Activated CD4-positive, alpha-beta T cell treated with anti-CD3 and anti-CD28 coated beads for 36 hours (primary cell): ENCODE measurements at regions of chr22 and their contacts with region 1.

Region 1: DNA sequence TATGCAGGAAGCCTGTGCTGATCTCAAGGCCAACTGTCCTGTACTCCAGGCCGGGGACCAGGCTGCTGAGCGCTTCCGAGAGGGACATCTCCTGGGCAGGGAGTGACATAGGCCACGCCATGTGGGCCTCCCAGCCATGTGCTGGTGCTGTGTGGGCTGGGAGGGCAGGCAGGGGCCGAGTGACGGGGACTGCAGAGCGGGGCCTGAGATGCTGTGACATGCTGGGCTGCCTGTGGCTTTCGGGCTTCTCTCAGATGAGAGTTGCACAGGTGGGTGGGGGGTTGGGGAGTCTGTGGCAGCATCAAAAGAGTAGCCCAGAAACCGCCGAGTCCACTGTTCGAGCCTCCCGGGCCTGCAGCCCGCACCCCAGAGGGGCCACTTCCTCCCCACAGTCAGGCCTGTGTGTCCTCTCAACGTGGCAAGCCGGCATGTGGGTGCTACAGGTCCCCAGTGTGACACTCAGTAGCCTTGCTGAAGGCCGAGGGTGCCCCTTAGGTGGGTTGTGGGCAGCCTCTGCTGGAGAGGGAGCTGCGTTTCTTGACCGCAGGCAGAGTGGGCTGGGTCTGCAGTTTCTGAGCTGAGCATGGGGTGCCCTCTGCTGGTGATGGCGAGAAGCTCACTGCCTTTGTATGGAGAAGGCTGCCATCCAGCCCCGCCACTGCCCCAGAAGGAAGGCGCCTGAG is 101.2 kb downstream of the BCR start:
- DNase-seq: peak; percentile 89
- ATAC-seq: peak; percentile 71
- H3K4me3 Mint-ChIP-seq: no peak overlapping the region
- H3K27ac Mint-ChIP-seq: no peak overlapping the region
- H3K4me1 Mint-ChIP-seq: peaks cover 25% of the 10 kb centered on the region
- H3K27me3 Mint-ChIP-seq: no peaks in the 10 kb centered on the region

Region 2: GRCh38 chr22:23240639-23241389 is 40.7 kb before region 1 on chr22:
- CTCF ChIA-PET with region 1: interaction called, 5 read pairs
- POLR2A ChIA-PET with region 1: interaction called, 6 read pairs
- intact Hi-C with region 1: loop called (anchors 2 to 5 kb)
- DNase-seq: peak; percentile 72
- ATAC-seq: peak; percentile 34
- H3K4me3 Mint-ChIP-seq: no peak overlapping the region
- H3K27ac Mint-ChIP-seq: peak overlapping the region; percentile 84
- H3K4me1 Mint-ChIP-seq: peaks cover 93% of the 10 kb centered on the region
- H3K27me3 Mint-ChIP-seq: no peaks in the 10 kb centered on the region